ENCODE measurements at regions of chr3 and their contacts with region 1.

Region 1: GRCh38 chr3:189132231-189132707 is 39.5 kb upstream of the TPRG1 start:
- DNase-seq: peak; percentile 88
- ATAC-seq: peak; percentile 96
- H3K4me3 Mint-ChIP-seq: peak overlapping the region; percentile 24
- H3K27ac Mint-ChIP-seq: peak overlapping the region; percentile 58
- H3K4me1 Mint-ChIP-seq: peaks cover 21% of the 10 kb centered on the region
- H3K27me3 Mint-ChIP-seq: no peaks in the 10 kb centered on the region

Region 2: GRCh38 chr3:188164248-188164687 is 968.0 kb before region 1 on chr3:
- CTCF ChIA-PET with region 1: no interaction called
- POLR2A ChIA-PET with region 1: no interaction called
- intact Hi-C with region 1: loop called in 1 of 2 experiments (anchors 10 kb)
- DNase-seq: peak; percentile 52
- ATAC-seq: peak; percentile 24
- H3K4me3 Mint-ChIP-seq: no peak overlapping the region
- H3K27ac Mint-ChIP-seq: peak overlapping the region; percentile 74
- H3K4me1 Mint-ChIP-seq: peaks cover 58% of the 10 kb centered on the region
- H3K27me3 Mint-ChIP-seq: no peaks in the 10 kb centered on the region

Region 3: DNA sequence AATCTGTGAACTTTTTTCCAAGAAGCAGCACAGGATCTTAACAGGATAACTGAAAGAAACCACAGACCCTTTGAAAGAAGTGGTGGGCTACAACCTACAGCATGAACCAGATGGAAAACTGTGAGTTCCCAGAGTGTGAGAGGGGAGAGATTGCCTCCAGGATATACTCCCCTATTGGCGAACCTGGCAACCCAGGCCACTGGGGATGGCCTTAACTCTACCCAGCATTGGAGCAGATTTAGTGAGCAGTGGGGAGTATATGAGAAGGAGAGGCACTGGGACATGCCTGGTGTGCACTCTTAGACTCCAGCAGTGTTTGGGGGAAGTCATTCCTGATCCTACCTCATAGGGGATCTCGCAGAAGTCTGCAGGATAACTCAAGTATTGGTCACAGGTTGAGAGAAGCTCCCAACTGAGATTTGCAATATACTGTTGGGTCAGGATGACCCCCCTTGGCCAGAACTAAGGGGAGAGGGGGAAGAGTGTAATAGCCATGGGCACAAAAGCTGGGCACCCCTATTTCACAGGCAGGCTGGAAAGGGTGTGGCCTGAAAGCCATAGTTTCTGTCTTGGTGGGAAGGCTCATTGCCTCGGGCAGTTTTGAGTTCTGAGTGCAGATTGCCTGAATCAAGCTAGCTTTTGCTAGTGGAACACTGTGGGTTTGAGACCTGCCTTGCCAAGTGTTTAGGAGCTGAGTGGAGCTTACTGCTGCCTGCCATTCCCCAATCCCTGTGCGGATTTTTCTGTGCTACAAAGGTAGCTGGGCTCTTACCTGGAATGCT is 298.1 kb after region 1 on chr3:
- CTCF ChIA-PET with region 1: no interaction called
- POLR2A ChIA-PET with region 1: no interaction called
- intact Hi-C with region 1: no loop called
- DNase-seq: no peak
- ATAC-seq: no peak
- H3K4me3 Mint-ChIP-seq: no peak overlapping the region
- H3K27ac Mint-ChIP-seq: no peak overlapping the region
- H3K4me1 Mint-ChIP-seq: peaks cover 1% of the 10 kb centered on the region
- H3K27me3 Mint-ChIP-seq: no peaks in the 10 kb centered on the region

Region 4: GRCh38 chr3:189778340-189778950 is 646.2 kb after region 1 on chr3:
- CTCF ChIA-PET with region 1: no interaction called
- POLR2A ChIA-PET with region 1: interaction called, 15 read pairs
- intact Hi-C with region 1: no loop called
- DNase-seq: no peak
- ATAC-seq: peak; percentile 58
- H3K4me3 Mint-ChIP-seq: no peak overlapping the region
- H3K27ac Mint-ChIP-seq: no peak overlapping the region
- H3K4me1 Mint-ChIP-seq: peaks cover 9% of the 10 kb centered on the region
- H3K27me3 Mint-ChIP-seq: peaks cover 3% of the 10 kb centered on the region

Measured in activated CD4-positive, alpha-beta T cell treated with anti-CD3 and anti-CD28 coated beads for 36 hours (primary cell).